ENCODE measurements at regions of chr20 and their contacts with region 1.

Region 1: GRCh38 chr20:59020938-59021551 is 1.8 kb downstream of the TUBB1 start:
- DNase-seq: no peak
- H3K4me3 ChIP-seq: no peak overlapping the region
- H3K27ac ChIP-seq: no peak overlapping the region
- H3K4me1 ChIP-seq: no peaks in the 10 kb centered on the region
- H3K27me3 ChIP-seq: no peaks in the 10 kb centered on the region
- CTCF ChIP-seq: no peak

Region 2: DNA sequence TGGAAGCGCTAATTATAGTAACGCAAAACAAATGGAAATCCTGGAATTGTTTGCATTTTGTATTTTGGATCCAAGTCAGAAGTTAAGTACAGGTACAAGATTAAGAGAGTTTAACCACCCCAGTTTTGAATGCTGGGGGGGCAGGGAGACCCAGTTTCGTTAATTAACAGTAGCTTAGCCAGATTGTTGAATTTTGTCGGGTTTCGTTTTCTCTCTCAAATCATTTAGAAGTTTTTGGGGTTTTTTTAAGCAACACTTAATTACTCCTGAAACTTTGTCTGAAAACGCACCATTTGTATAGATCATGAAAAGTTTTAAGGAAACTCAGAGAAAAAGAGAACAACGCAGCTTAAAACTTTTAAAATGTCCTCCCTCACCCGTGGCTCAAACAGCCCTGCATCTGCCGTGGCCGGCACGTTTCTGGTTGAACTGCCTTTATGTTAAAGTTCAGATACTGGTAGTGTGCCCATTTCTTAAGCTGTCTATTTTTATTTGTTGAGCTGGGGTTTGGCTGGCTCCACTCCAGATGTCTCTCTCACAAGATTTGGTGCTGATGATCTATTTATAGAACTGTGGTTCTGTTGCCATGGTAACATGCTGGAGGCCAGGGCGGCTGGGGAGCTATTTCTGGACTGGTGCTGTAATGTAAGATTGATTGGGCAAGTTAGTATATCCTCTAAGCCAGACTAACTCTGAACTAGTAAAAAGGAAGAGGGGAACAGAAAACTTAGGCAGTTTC is 113.5 kb before region 1 on chr20:
- intact Hi-C with region 1: loop called (anchors 10 kb)
- DNase-seq: peak; percentile 84 to 97 (median 92)
- H3K4me3 ChIP-seq: peak overlapping the region in 1 of 3 donors; percentile 37
- H3K27ac ChIP-seq: peak overlapping the region; percentile 60 to 89
- H3K4me1 ChIP-seq: peaks cover 0 to 12% (median 8%) of the 10 kb centered on the region in 3 donors
- H3K27me3 ChIP-seq: no peaks in the 10 kb centered on the region
- CTCF ChIP-seq: no peak

Region 3: GRCh38 chr20:59102841-59103299 is 81.8 kb after region 1 on chr20:
- intact Hi-C with region 1: no loop called
- DNase-seq: no peak
- H3K4me3 ChIP-seq: no peak overlapping the region
- H3K27ac ChIP-seq: no peak overlapping the region
- H3K4me1 ChIP-seq: no peaks in the 10 kb centered on the region
- H3K27me3 ChIP-seq: no peaks in the 10 kb centered on the region
- CTCF ChIP-seq: no peak

Region 4: DNA sequence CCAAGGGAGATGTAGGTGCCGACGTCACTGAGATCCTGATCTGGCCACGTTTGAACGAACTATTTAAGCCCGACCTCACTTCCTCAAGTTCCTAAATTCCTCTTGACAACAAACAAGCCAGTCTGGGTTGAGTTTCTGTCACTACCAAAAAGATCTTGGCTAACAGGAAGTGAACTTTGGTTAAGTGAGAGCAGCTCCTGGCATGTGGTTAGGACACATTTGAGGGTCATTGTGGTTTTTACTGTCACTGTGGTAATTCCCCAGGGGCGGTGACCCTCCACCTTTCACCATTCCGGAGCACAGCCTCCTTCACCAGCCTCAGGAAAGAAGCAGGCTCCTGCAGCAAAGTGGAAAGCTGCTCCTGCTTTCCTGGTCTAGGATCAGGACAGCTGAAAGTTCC is 99.4 kb after region 1 on chr20:
- intact Hi-C with region 1: no loop called
- DNase-seq: no peak
- H3K4me3 ChIP-seq: no peak overlapping the region
- H3K27ac ChIP-seq: no peak overlapping the region
- H3K4me1 ChIP-seq: no peaks in the 10 kb centered on the region
- H3K27me3 ChIP-seq: no peaks in the 10 kb centered on the region
- CTCF ChIP-seq: no peak